ENCODE measurements at regions of chr11 and their contacts with region 1.

Region 1: DNA sequence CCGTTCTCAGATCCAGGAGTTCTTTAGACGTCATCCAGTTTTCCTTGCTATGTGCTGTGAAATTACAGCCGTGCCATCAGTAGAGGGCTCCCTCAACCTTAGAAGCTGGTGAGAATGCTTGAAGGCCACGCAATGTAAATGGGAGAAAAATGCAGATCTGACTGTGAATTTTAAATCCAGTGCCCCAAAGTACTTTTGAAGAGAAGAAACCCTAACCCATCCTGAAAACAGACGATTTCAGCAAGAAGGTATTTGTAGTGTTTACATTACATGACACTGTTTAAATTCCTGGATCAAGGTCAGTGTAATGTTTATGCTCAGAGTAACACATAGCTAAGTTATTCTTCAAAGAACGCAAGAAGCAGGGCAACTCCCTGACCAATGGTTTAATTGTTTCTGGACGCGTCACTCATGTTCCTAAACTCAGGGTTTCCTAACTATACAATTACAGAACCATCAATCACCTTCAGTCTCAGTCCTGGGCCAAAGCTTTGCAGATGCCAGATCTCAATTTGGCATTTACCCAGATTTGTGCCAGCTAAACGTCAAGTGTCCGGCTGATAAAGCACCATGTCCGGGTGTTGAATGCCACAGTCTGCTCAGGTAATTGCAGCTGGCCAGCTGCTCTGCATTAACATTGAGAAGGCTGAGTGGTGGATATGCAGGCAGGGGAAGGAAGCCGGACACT is 38.2 kb downstream of the ADAMTS8 start:
- DNase-seq: peak; percentile 63
- H3K4me3 Mint-ChIP-seq: no peak overlapping the region
- H3K27ac Mint-ChIP-seq: no peak overlapping the region
- H3K4me1 Mint-ChIP-seq: peaks cover 15% of the 10 kb centered on the region
- H3K27me3 Mint-ChIP-seq: peaks cover 36% of the 10 kb centered on the region
- CTCF ChIP-seq: peak; percentile 47

Region 2: GRCh38 chr11:130407978-130408377 is 17.8 kb after region 1 on chr11:
- CTCF ChIA-PET with region 1: interaction called, 10 read pairs
- POLR2A ChIA-PET with region 1: interaction called, 3 read pairs
- intact Hi-C with region 1: loop called (anchors 1 kb)
- DNase-seq: peak; percentile 94
- H3K4me3 Mint-ChIP-seq: no peak overlapping the region
- H3K27ac Mint-ChIP-seq: no peak overlapping the region
- H3K4me1 Mint-ChIP-seq: peaks cover 17% of the 10 kb centered on the region
- H3K27me3 Mint-ChIP-seq: no peaks in the 10 kb centered on the region
- CTCF ChIP-seq: no peak

Region 3: GRCh38 chr11:130413405-130414106 is 23.3 kb after region 1 on chr11:
- CTCF ChIA-PET with region 1: interaction called, 10 read pairs
- POLR2A ChIA-PET with region 1: interaction called, 3 read pairs
- intact Hi-C with region 1: loop called (anchors 1 kb)
- DNase-seq: peak; percentile 81
- H3K4me3 Mint-ChIP-seq: no peak overlapping the region
- H3K27ac Mint-ChIP-seq: no peak overlapping the region
- H3K4me1 Mint-ChIP-seq: peaks cover 9% of the 10 kb centered on the region
- H3K27me3 Mint-ChIP-seq: no peaks in the 10 kb centered on the region
- CTCF ChIP-seq: no peak

Region 4: GRCh38 chr11:130427581-130428315 is 37.5 kb after region 1 on chr11:
- CTCF ChIA-PET with region 1: interaction called, 10 read pairs
- POLR2A ChIA-PET with region 1: no interaction called
- intact Hi-C with region 1: loop called (anchors 1 kb)
- DNase-seq: no peak
- H3K4me3 Mint-ChIP-seq: no peak overlapping the region
- H3K27ac Mint-ChIP-seq: no peak overlapping the region
- H3K4me1 Mint-ChIP-seq: peaks cover 5% of the 10 kb centered on the region
- H3K27me3 Mint-ChIP-seq: peaks cover 73% of the 10 kb centered on the region
- CTCF ChIP-seq: no peak

Region 5: DNA sequence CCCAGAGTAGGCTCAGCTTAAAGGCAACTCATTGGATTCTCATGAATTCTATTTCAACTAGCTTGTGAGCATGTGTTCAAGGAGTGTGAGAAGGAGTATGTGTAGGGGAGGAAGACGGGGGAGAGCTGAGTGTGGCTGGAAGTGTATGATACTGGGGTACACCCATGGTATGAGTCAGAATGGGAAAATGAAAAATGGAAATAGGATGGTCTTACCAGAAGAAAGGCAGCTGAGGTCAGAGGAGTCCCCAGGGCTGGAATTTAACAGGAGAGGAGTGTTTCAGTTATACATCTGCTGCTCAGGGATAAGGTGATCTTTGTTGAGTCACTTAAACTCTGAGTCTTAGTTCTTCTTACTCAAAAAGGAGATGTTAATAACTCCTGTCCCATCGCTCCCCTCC is 51.5 kb after region 1 on chr11:
- CTCF ChIA-PET with region 1: no interaction called
- POLR2A ChIA-PET with region 1: no interaction called
- intact Hi-C with region 1: no loop called
- DNase-seq: no peak
- H3K4me3 Mint-ChIP-seq: no peak overlapping the region
- H3K27ac Mint-ChIP-seq: no peak overlapping the region
- H3K4me1 Mint-ChIP-seq: peaks cover 6% of the 10 kb centered on the region
- H3K27me3 Mint-ChIP-seq: no peaks in the 10 kb centered on the region
- CTCF ChIP-seq: no peak

Measured in MCF 10A (cell line).